Right ventricle myocardium inferior (tissue), 1 donor: ENCODE measurements at regions of chr2 and their contacts with region 1.

Region 1: DNA sequence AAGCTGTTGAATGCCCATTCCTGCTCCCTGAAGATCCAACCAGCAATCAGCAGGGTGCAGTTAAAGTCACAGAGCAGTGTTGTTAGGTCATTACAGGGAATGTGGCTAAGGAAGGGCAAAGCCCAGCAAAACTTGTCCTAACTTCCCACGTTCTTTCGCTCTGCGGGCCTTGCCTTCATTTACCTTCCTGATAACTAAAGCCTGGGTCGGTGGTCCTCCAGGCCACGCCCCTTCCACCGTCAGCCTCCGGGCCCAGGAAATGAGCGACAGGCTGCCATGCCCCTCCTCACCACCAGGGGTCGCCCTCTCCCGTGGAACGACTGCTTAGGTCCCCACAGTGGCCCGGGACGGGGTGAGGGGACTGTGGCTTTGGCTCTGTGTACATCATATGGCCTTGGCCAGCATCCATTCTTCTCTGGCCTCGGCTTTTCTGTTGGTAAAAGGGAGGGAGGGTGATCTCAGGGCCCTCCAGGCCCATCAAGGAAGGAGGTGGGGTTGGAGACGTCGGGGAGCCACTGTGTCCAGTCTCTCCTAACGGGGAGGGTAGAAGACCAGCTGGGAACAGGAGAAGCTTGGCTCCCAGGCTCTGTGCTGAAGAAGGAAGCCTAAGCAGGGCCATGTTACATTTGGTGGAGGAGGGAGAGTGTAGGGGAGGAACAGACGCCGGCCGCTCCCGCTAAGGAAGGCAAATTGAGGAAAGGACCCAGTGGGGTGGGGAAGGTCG is 2.2 kb downstream of the SH2D6 start:
- DNase-seq: peak; percentile 95
- ATAC-seq: peak; percentile 81

Region 2: DNA sequence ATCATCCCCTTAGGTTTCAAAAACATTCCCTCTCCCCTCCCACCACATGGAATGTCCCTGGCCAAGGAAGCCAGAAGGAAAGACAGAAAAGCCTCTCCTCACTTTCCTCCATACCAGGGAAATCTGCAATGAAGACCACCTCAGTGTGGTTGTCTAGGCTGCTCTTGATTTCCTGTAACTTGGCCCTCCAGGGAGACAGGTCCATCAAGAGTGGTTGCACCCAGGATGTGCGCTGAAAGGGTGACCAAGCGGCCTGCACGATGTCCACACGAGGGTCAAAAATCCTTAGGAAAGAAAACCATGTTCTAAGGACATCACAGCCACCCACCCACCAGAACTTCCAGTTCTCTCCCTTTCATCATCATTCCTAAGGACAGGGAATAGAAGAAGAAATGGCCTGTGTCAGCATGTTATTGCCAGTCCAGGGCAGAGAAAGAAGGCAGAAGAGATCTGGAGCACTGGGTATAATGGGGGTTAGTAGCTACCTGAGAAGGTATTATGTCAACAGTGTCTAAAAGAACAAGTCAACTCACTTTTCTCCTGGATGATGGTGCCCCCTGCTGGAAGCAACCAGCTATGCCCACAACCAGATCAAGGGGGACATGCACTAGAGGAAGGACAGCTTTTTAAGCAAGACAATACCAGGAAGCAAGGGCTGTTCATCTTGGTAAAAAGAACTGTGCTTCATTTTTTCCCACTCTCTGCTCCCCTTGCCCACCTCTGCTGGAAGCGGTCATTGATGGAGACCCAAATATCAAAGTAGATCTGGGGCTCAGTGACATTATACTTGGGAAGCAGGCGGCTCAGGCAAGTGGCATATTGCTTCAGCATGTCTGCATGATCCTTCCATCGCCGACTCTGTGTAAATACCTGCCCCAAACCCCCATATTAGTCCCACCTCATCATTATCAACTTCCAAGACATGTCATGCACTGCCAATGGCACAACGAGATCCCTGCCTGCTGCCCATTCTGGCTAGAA is 131.3 kb after region 1 on chr2:
- intact Hi-C with region 1: loop called (anchors 1 kb)
- DNase-seq: peak; percentile 76
- ATAC-seq: peak; percentile 67